GM12878 (cell line): ENCODE measurements at regions of chr15 and their contacts with region 1.

Region 1: GRCh38 chr15:85044251-85044853 is 62.7 kb downstream of the PDE8A start:
- DNase-seq: peak; percentile 44
- ATAC-seq: peak; percentile 88
- H3K4me3 ChIP-seq: no peak overlapping the region
- H3K27ac ChIP-seq: no peak overlapping the region
- H3K4me1 ChIP-seq: no peaks in the 10 kb centered on the region; the same call in 1 of the 2 replicates
- H3K27me3 ChIP-seq: no peaks in the 10 kb centered on the region
- CTCF ChIP-seq: peak; percentile 66 to 77 (median 74)
- EP300 ChIP-seq: no peak
- POLR2A ChIP-seq: no peak
- RAD21 ChIP-seq: peak; percentile 85

Region 2: GRCh38 chr15:84600851-84601838 is 443.2 kb before region 1 on chr15 and contains the start of gene ZSCAN2:
- CTCF ChIA-PET with region 1: interaction called, 16 read pairs
- POLR2A ChIA-PET with region 1: no interaction called
- RAD21 ChIA-PET with region 1: no interaction called
- SMC1A ChIA-PET with region 1: interaction called, 4 read pairs
- in situ Hi-C with region 1: no loop called
- intact Hi-C with region 1: no loop called
- DNase-seq: peak; percentile 66
- ATAC-seq: peak; percentile 93
- H3K4me3 ChIP-seq: peak within 1 kb of the TSS; percentile 90
- H3K27ac ChIP-seq: peak within 1 kb of the TSS; percentile 27
- H3K4me1 ChIP-seq: peaks cover 42% of the 10 kb centered on the region
- H3K27me3 ChIP-seq: no peaks in the 10 kb centered on the region
- CTCF ChIP-seq: no peak
- EP300 ChIP-seq: peak in 1 of 2 experiments; percentile 32; a peak in 1 of 4 replicates
- POLR2A ChIP-seq: peak; percentile 71
- RAD21 ChIP-seq: no peak
- polyA plus RNA-seq, gene ZSCAN2: 2.7 to 3.0 TPM

Region 3: DNA sequence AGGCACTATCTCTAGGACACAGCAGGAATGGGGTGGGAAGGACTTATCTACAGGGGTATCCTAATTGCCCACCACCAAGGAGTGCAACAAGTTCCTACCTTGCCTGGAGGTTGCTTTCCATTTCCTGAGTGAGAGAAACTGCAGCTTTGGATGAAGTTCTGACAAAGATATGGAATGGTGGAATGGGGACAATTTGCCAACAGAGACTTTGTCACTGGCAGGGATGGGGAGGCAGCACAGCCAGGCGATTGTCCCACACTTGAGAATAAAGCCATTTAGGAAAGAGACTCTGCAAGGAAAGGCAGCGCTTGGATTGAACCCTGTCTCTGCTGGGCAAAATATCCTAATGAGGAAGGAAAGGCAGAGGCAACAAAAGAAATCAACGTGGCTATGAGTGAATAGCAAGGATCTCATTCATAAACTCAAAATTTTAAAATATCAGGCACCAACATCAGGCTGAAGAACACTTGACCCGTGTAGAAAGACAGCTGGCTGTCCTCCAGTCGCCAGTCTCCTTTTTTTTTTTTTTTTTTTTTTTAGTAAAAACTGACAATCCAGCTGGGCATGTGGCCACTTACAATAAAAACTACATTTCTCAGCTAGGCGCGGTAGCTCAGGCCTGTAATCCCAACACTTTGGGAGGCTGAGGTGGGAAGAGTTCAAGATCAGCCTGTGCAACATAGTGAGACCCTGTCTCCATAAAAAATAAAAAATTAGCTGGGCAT is 94.3 kb before region 1 on chr15:
- CTCF ChIA-PET with region 1: interaction called, 27 read pairs
- POLR2A ChIA-PET with region 1: no interaction called
- RAD21 ChIA-PET with region 1: interaction called, 36 read pairs
- SMC1A ChIA-PET with region 1: interaction called, 23 read pairs
- in situ Hi-C with region 1: no loop called
- intact Hi-C with region 1: loop called (anchors 1 kb)
- DNase-seq: no peak
- ATAC-seq: no peak
- H3K4me3 ChIP-seq: no peak overlapping the region
- H3K27ac ChIP-seq: no peak overlapping the region
- H3K4me1 ChIP-seq: no peaks in the 10 kb centered on the region
- H3K27me3 ChIP-seq: no peaks in the 10 kb centered on the region
- CTCF ChIP-seq: no peak
- EP300 ChIP-seq: no peak
- POLR2A ChIP-seq: no peak
- RAD21 ChIP-seq: no peak

Region 4: DNA sequence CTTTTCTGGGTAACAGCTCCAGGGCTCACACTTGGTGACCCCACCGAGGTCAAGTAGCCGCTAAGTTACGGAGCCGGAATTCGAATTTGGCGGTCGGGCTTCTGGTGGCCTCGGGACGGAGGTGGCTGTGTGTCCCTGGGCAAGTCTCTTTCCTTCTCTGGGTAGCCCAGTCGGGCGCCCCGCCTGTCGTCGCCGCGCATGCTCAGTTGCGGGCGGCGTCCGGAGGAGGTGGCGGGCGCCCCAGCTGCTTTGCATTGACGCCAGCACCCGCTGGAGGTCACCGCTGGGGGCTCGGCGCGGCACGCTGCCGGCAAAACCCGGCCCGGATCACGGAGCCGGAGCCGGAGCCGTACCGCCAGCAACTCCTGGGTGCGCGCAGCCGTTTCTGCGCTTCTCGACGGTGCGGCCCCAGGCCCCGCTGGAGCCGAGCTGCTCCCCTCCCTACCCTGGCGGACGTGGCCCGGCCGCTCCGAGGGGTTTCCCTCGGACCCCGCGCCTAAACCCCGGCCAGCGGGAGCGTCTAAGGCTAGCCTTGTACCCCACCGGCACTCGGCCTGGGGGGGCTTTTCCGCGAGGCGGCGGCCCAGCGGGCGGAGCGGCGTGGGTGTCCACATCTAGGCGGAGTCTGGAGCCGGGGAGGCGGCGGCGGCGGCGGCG is 63.2 kb before region 1 on chr15:
- CTCF ChIA-PET with region 1: interaction called, 20 read pairs
- POLR2A ChIA-PET with region 1: interaction called, 4 read pairs
- RAD21 ChIA-PET with region 1: interaction called, 9 read pairs
- SMC1A ChIA-PET with region 1: interaction called, 80 read pairs
- in situ Hi-C with region 1: no loop called
- intact Hi-C with region 1: loop called (anchors 2 kb)
- DNase-seq: peak; percentile 87
- ATAC-seq: peak; percentile 79
- H3K4me3 ChIP-seq: peak overlapping the region; percentile 94
- H3K27ac ChIP-seq: peak overlapping the region; percentile 92
- H3K4me1 ChIP-seq: peaks cover 9% of the 10 kb centered on the region
- H3K27me3 ChIP-seq: no peaks in the 10 kb centered on the region
- CTCF ChIP-seq: no peak
- EP300 ChIP-seq: peak; percentile 58 to 65; a peak in 1 of 4 replicates
- POLR2A ChIP-seq: peak; percentile 77
- RAD21 ChIP-seq: no peak

Region 5: DNA sequence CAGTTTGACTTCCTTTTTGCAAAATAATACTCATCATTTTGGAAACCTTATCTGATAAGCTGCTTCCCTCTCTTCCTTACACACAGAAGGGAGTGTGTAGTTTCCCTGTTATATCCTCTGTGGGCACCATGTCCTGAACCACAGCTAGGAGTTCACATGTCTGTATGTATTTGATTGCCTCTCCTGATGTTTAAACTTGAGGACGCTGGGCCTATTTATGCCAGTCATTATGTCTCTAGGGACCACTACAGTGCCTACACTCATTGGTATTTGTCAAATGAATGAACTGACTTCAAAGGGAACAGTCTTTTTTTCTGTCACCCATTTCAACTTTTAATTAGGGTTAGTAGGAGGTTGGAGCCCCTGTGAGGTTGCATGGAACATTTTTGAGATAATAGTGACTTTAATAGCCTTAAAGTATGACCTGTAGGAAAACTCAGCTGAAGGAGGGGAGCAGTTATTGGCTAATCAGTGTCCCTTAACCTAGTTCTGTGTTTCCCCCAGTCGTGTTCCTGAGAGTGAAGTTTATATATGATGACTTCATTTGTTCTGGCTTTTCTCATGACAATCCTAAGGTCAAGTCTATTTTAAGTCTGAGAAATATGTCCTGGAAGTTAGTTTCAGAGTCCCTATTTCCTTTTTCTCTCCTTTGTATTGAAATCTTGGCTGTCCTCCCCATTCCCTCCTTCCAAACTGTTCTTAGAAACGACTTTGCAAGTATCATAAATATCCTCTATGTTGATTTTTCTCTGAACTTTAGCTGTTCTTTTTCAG is 33.8 kb before region 1 on chr15:
- CTCF ChIA-PET with region 1: interaction called, 10 read pairs
- POLR2A ChIA-PET with region 1: no interaction called
- RAD21 ChIA-PET with region 1: interaction called, 9 read pairs
- SMC1A ChIA-PET with region 1: interaction called, 16 read pairs
- in situ Hi-C with region 1: no loop called
- intact Hi-C with region 1: no loop called
- DNase-seq: no peak
- ATAC-seq: peak; percentile 70
- H3K4me3 ChIP-seq: no peak overlapping the region
- H3K27ac ChIP-seq: peak overlapping the region; percentile 56
- H3K4me1 ChIP-seq: peaks cover 50% of the 10 kb centered on the region
- H3K27me3 ChIP-seq: no peaks in the 10 kb centered on the region
- CTCF ChIP-seq: no peak
- EP300 ChIP-seq: no peak
- POLR2A ChIP-seq: no peak
- RAD21 ChIP-seq: no peak

Region 6: DNA sequence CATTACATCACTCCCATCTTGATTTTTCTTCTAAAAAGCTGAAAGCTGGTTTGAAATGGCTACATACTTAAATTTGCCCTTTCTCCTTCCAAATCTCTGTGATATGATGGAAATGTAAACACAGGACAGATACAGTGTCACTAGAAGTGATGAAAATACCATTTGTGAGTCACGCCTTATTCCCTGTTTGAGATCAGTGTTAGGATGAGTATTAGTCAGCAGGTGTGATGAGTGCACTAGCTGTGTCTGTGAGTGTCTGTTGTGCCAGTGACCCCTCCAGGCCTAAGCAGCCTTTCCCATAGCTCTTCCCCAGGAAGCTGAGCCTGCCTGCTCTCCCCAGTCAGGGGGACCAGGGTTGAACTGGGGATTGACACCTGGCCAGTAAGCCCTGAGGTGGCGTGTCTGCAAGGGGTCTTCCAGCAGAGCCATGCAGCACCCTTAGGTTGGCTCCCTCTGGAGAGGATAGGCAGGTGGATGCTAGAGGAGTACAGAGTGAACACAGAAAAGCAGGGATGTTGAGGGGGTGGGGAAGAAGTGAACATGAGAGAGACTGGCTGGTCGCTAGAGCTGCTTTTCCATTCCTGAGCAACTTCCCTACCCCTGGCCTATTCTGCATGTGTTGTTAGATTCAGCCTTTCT is 29.3 kb after region 1 on chr15:
- CTCF ChIA-PET with region 1: interaction called, 18 read pairs
- POLR2A ChIA-PET with region 1: no interaction called
- RAD21 ChIA-PET with region 1: no interaction called
- SMC1A ChIA-PET with region 1: interaction called, 3 read pairs
- in situ Hi-C with region 1: no loop called
- intact Hi-C with region 1: no loop called
- DNase-seq: no peak
- ATAC-seq: peak; percentile 97
- H3K4me3 ChIP-seq: no peak overlapping the region
- H3K27ac ChIP-seq: no peak overlapping the region
- H3K4me1 ChIP-seq: no peaks in the 10 kb centered on the region
- H3K27me3 ChIP-seq: no peaks in the 10 kb centered on the region
- CTCF ChIP-seq: no peak; a peak in 1 of 6 replicates
- EP300 ChIP-seq: peak in 1 of 2 experiments; percentile 49; a peak in 1 of 4 replicates
- POLR2A ChIP-seq: no peak
- RAD21 ChIP-seq: peak; percentile 11; the same call in 1 of the 2 replicates

Region 7: DNA sequence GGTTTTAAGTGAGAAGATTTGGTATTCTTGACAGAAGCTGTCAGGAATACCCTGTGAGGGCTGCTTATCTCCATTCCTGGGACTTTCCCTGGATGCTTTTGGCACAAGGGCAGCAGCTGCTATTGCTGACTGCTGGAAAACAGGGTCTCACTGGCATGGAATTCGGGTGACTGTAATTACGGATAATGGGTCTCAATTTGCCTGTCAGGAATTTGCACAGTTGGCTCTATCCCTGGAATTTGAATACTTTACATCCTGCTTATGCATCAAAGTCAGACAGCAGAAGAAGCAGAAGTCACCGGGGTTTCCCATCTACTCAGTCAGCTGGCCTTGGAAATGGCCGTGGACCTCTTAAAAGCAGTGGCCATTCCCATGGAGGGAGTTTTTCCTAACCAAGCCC is 310.1 kb after region 1 on chr15:
- CTCF ChIA-PET with region 1: no interaction called
- POLR2A ChIA-PET with region 1: no interaction called
- RAD21 ChIA-PET with region 1: no interaction called
- SMC1A ChIA-PET with region 1: no interaction called
- in situ Hi-C with region 1: no loop called
- intact Hi-C with region 1: no loop called
- DNase-seq: no peak
- ATAC-seq: no peak
- H3K4me3 ChIP-seq: no peak overlapping the region
- H3K27ac ChIP-seq: no peak overlapping the region
- H3K4me1 ChIP-seq: peaks cover 8% of the 10 kb centered on the region
- H3K27me3 ChIP-seq: no peaks in the 10 kb centered on the region; a peak in 1 of 4 replicates
- CTCF ChIP-seq: no peak
- EP300 ChIP-seq: no peak
- POLR2A ChIP-seq: no peak
- RAD21 ChIP-seq: no peak